ENCODE measurements at regions of chr19 and their contacts with region 1.

Region 1: GRCh38 chr19:49983645-49984229 is 22.8 kb upstream of the SIGLEC11 start:
- DNase-seq: no peak
- ATAC-seq: peak; percentile 70
- H3K4me3 ChIP-seq: no peak overlapping the region
- H3K27ac ChIP-seq: no peak overlapping the region
- H3K4me1 ChIP-seq: no peaks in the 10 kb centered on the region
- H3K27me3 ChIP-seq: no peaks in the 10 kb centered on the region
- CTCF ChIP-seq: peak; percentile 86

Region 2: GRCh38 chr19:49937750-49938381 is 45.9 kb before region 1 on chr19:
- intact Hi-C with region 1: loop called (anchors 5 kb)
- DNase-seq: peak; percentile 90
- ATAC-seq: peak; percentile 95
- H3K4me3 ChIP-seq: no peak overlapping the region
- H3K27ac ChIP-seq: no peak overlapping the region
- H3K4me1 ChIP-seq: peaks cover 5% of the 10 kb centered on the region
- H3K27me3 ChIP-seq: no peaks in the 10 kb centered on the region
- CTCF ChIP-seq: peak; percentile 95